CD4-positive, alpha-beta memory T cell (primary cell): ENCODE measurements at regions of chr6 and their contacts with region 1.

Region 1: DNA sequence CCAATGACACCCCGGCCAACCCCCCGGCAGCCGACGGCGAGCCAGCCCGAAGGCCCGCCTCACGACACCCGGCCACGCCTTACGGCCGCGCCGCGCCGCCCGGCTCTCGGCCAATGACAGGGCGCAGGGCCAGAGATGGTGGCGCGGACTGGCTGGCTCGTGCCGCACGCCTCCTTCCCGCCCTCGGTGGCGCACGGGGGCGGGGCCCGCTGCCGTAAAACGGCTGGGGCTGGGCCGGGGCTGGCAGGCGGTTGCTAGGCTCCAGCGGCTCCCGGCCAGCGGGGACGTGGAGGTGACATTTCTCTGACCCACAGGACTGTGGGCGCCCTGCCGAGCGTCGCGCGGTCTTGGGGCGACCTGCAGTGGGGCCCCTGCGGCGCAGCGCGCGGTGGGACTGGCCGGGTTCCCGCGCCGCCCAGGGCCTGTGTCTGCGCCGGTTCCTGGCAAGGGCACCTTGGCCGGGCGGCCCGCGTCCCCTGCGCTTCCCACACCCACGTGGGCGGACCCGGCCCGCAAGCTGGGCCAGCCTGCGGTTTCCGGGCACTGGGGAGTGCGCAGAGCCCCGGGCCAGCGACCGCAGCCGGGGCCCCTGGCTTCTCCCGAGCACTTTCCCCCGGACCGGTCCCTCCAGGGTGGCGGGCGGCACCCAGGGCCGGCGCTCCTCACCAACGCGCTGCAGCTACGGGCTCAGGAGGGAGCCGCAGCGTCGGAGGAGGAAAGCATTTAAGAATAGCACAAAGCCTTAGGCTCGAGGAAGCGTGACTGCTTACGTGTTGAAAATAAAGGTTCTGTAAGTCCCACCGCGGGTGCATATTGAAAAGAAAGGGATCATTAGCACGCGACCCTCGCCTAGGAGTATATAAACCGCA is at the start of gene MPC1:
- DNase-seq: peak; percentile 93 to 95 (median 94)
- H3K4me3 ChIP-seq: peak within 1 kb of the TSS; percentile 63 to 75
- H3K4me3 Mint-ChIP-seq: peak within 1 kb of the TSS; percentile 89 to 96 (median 93)
- H3K27ac ChIP-seq: peak within 1 kb of the TSS; percentile 77
- H3K27ac Mint-ChIP-seq: peak within 1 kb of the TSS; percentile 92 to 97 (median 93)
- H3K4me1 ChIP-seq: peaks cover 6% of the 10 kb centered on the region
- H3K4me1 Mint-ChIP-seq: peaks cover 5 to 22% (median 7%) of the 10 kb centered on the region in 4 donors
- H3K27me3 ChIP-seq: no peaks in the 10 kb centered on the region
- H3K27me3 Mint-ChIP-seq: no peaks in the 10 kb centered on the region
- total RNA-seq, gene MPC1: 33.1 to 34.7 TPM

Region 2: GRCh38 chr6:166173281-166173951 is 209.8 kb before region 1 on chr6:
- CTCF ChIA-PET with region 1: no interaction called
- POLR2A ChIA-PET with region 1: no interaction called
- intact Hi-C with region 1: loop called (anchors 10 kb)
- DNase-seq: no peak
- H3K4me3 ChIP-seq: no peak overlapping the region
- H3K4me3 Mint-ChIP-seq: no peak overlapping the region
- H3K27ac ChIP-seq: no peak overlapping the region
- H3K27ac Mint-ChIP-seq: no peak overlapping the region
- H3K4me1 ChIP-seq: peaks cover 6% of the 10 kb centered on the region
- H3K4me1 Mint-ChIP-seq: peaks cover 3 to 9% (median 4%) of the 10 kb centered on the region in 4 donors
- H3K27me3 ChIP-seq: peaks cover 25% of the 10 kb centered on the region
- H3K27me3 Mint-ChIP-seq: peaks cover 20 to 22% of the 10 kb centered on the region in 2 donors

Region 3: GRCh38 chr6:166313255-166314070 is 69.7 kb before region 1 on chr6:
- CTCF ChIA-PET with region 1: interaction called, 37 read pairs
- POLR2A ChIA-PET with region 1: interaction called, 3 read pairs
- intact Hi-C with region 1: loop called (anchors 1 kb)
- DNase-seq: peak in 4 of 5 donors; percentile 8 to 55 (median 32)
- H3K4me3 ChIP-seq: no peak overlapping the region
- H3K4me3 Mint-ChIP-seq: no peak overlapping the region
- H3K27ac ChIP-seq: no peak overlapping the region
- H3K27ac Mint-ChIP-seq: no peak overlapping the region
- H3K4me1 ChIP-seq: peaks cover 3% of the 10 kb centered on the region
- H3K4me1 Mint-ChIP-seq: peaks cover 0 to 6% (median 2%) of the 10 kb centered on the region in 4 donors
- H3K27me3 ChIP-seq: peaks cover 6% of the 10 kb centered on the region
- H3K27me3 Mint-ChIP-seq: peaks cover 7 to 15% of the 10 kb centered on the region in 2 donors

Region 4: DNA sequence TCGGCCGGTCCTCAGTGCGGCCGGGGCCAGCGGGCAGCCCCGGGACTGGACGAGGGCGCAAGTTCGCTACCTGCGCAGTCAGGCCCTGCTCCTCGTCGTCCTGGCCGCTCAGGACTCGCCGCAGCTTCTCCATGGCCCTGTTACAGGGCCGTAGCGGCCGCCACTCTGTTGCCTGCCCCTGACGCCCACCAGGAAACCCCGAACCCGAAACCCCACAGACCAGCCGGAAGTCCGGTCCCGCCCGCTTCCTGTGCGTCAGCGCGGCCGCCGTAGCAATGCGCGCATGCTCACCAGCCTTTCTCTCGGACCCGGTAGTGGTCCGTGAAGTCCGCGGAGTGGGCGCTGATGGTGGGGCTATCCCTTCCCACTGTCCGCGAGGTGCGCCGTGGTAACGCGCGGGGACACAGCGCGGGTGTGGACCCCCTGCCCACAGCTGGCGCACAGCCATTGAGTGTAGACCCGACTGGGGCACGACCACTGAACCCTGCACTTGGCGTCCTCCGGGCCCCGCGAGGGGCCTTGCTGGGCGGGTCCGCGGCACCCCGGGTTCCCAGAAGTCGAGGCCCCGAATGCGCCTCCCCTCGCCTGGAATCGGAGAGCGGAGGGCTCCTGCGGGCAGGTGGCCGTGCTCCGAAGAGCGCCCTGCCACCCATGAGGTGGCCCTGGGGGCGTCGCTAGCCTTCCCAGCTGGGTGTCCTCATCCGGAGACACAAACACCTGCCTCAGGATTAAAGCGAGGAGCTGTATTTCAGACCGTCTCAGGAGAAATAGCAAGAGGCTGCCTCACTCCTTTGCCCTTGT is 40.6 kb before region 1 on chr6 and contains the start of gene SFT2D1:
- CTCF ChIA-PET with region 1: interaction called, 13 read pairs
- POLR2A ChIA-PET with region 1: interaction called, 3 read pairs
- intact Hi-C with region 1: loop called (anchors 1 kb)
- DNase-seq: peak; percentile 48 to 70 (median 57)
- H3K4me3 ChIP-seq: peak within 1 kb of the TSS; percentile 26 to 93
- H3K4me3 Mint-ChIP-seq: peak within 1 kb of the TSS; percentile 88 to 94 (median 92)
- H3K27ac ChIP-seq: peak within 1 kb of the TSS; percentile 64
- H3K27ac Mint-ChIP-seq: peak within 1 kb of the TSS; percentile 66 to 94 (median 91)
- H3K4me1 ChIP-seq: peaks cover 49% of the 10 kb centered on the region
- H3K4me1 Mint-ChIP-seq: peaks cover 5 to 18% (median 11%) of the 10 kb centered on the region in 4 donors
- H3K27me3 ChIP-seq: no peaks in the 10 kb centered on the region
- H3K27me3 Mint-ChIP-seq: no peaks in the 10 kb centered on the region
- total RNA-seq, gene SFT2D1: 37.5 to 40.3 TPM

Region 5: DNA sequence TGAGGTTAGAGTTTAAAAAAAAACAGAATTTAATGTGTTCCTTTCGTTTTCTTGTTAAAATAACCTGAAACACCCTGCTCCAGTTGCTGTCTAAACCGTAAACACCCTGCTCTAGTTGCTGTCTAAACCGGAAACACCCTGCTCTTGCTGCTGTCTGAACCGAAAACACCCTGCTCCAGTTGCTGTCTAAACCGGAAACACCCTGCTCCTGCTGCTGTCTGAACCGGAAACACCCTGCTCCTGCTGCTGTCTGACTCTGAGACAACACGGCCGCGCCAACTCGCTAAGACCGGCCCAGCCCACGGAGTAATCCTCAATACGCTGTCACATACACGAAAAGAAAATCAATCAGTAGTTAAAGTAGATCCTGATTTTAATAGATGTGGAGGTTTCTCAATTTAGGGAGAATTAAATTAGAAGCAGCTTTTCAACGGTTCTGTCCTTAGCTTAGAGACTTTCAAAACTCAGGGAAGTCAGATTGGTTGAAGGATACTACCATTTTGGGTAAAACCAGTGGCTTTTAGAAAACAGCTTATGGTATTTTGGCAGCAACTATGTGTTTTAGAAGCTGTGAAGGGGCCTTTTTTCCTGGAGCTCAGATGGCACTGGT is 105.0 kb after region 1 on chr6:
- CTCF ChIA-PET with region 1: interaction called, 3 read pairs
- POLR2A ChIA-PET with region 1: interaction called, 4 read pairs
- intact Hi-C with region 1: loop called (anchors 1 kb)
- DNase-seq: peak; percentile 79 to 92 (median 85)
- H3K4me3 ChIP-seq: peak overlapping the region in 1 of 2 donors; percentile 39
- H3K4me3 Mint-ChIP-seq: peak overlapping the region; percentile 69 to 89 (median 82)
- H3K27ac ChIP-seq: peak overlapping the region; percentile 61
- H3K27ac Mint-ChIP-seq: peak overlapping the region; percentile 83 to 99 (median 92)
- H3K4me1 ChIP-seq: peaks cover 24% of the 10 kb centered on the region
- H3K4me1 Mint-ChIP-seq: peaks cover 17 to 37% (median 30%) of the 10 kb centered on the region in 4 donors
- H3K27me3 ChIP-seq: no peaks in the 10 kb centered on the region
- H3K27me3 Mint-ChIP-seq: no peaks in the 10 kb centered on the region

Region 6: DNA sequence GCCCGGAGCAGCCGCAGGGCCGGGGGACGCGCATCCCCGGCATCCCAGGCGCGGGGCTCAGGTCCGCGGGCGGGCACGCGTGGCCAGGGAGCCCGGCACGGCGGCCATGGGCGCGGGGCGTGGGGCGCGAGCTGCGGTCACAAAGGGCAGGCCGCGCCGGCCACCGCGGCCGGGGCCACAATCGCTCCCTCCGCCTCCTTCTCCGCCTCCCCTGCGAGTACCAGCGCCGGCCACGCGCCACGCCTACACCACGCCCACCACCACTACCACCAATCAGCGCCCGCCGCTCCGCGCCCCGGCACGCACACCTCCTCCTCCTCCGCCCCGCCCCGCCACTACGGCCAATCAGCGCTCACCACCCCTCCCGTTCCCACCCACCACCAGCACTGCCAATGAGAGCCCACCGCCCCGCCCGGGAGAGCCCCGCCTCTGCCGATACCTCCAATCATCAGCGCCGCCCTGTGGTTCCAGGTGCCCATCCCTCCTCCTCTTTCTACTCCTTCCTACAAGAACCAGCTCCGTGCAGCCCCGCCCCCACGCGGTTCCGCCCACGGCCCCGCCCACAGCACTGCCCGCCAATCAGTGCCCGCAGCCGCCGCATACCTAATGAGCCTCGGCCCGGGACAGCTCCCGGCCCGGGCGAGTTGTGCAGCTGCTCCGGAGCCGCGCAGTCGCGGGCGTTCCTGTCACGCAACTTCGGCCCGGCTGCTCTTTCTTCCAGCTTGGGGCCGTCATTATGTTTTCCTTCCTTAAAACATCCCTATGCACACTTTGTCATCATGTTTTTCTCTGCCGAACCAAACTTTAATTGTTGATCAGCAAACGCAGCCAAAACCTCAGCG is 244.1 kb after region 1 on chr6 and contains the start of gene RPS6KA2:
- CTCF ChIA-PET with region 1: interaction called, 6 read pairs
- POLR2A ChIA-PET with region 1: no interaction called
- intact Hi-C with region 1: loop called (anchors 1 kb)
- DNase-seq: peak; percentile 100
- H3K4me3 ChIP-seq: peak within 1 kb of the TSS; percentile 71 to 76
- H3K4me3 Mint-ChIP-seq: peak within 1 kb of the TSS; percentile 87 to 97 (median 90)
- H3K27ac ChIP-seq: peak within 1 kb of the TSS; percentile 25
- H3K27ac Mint-ChIP-seq: peak within 1 kb of the TSS; percentile 89 to 97 (median 95)
- H3K4me1 ChIP-seq: peaks cover 20% of the 10 kb centered on the region
- H3K4me1 Mint-ChIP-seq: peaks cover 12 to 25% (median 15%) of the 10 kb centered on the region in 4 donors
- H3K27me3 ChIP-seq: peaks cover 8% of the 10 kb centered on the region
- H3K27me3 Mint-ChIP-seq: peaks cover 21 to 39% of the 10 kb centered on the region in 2 donors
- total RNA-seq, gene RPS6KA2: 9.7 to 10.6 TPM